AG04450 (cell line): ENCODE measurements at regions of chr2 and their contacts with region 1.

Region 1: DNA sequence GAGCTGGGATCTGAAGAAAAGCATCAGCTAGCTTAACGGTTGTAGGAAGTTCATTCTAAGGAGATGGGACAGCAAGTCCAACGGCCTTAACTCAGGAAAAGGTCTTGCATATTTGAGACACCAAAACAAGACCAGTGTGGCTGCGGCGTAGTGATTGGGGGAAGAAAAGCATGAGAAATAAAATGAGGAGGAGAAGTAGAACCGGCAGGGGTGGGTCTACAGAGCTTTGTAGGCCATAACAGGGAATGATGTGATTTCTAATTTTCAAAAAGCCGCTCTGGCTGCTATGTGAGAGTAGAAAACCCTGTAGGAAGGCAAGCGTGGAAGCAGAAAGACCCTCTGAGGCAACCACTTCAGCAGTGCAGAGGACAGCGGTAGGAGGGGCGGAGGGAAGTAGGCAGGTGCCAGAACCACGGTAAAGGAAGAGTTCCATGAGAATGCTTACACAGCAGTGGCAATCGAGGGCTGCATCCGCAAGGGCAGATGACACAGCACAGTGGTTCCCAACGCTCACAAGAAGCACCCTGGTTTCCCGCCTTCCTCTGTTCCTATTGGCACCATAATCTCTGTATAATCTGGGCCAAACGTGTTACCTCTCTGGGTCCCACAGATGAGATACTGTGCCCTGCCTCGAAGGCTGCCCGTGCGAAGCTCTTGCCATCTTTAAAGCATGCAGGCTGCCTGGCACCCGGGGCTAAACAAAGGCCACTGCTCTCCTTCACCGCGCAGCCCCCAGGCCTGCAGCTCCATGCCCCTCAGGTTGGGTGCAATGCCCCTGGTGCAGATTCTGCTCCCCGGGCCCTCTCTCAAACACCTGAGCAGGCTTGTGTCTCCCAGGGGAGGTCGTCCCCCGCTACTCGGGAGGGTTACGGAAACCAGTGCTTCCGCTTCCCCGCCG is 791 bp downstream of the ANKRD39 start:
- DNase-seq: no peak
- H3K4me3 ChIP-seq: peak overlapping the region; percentile 80
- H3K27ac ChIP-seq: peak overlapping the region; percentile 52
- H3K27me3 ChIP-seq: no peaks in the 10 kb centered on the region
- CTCF ChIP-seq: no peak

Region 2: GRCh38 chr2:95700519-95700918 is 1156.5 kb before region 1 on chr2:
- CTCF ChIA-PET with region 1: no interaction called
- POLR2A ChIA-PET with region 1: no interaction called
- DNase-seq: no peak
- H3K4me3 ChIP-seq: no peak overlapping the region
- H3K27ac ChIP-seq: no peak overlapping the region
- H3K27me3 ChIP-seq: peaks cover 16% of the 10 kb centered on the region
- CTCF ChIP-seq: no peak

Region 3: DNA sequence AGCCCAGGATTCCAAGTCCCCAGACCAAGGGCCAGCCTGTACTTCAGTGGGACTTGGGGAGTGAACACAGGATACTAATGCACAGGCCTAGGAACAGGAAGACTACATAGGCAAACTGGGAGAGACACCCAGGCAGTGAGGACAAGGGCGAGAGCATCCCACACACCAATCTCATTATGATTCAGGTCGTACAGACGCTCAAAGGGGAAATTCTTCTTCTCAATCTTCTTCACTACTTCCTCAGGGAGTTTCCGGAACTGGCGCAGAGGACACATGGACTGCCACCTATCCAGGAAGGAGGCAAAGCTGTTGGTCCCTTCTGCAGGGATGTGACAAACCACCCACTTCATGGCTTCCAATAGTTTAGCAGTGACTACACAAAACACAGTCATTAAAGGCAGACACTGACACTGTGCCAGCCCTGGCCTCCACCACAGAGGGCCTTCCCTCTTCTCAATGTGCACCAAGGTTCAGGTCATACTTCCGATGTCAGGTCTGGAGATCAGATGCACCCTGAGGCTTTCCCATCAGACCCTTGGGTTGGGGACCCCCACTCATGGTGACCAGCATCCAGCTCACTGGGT is 569.7 kb before region 1 on chr2:
- CTCF ChIA-PET with region 1: no interaction called
- POLR2A ChIA-PET with region 1: no interaction called
- DNase-seq: no peak
- H3K4me3 ChIP-seq: no peak overlapping the region
- H3K27ac ChIP-seq: no peak overlapping the region
- H3K27me3 ChIP-seq: no peaks in the 10 kb centered on the region
- CTCF ChIP-seq: no peak

Region 4: DNA sequence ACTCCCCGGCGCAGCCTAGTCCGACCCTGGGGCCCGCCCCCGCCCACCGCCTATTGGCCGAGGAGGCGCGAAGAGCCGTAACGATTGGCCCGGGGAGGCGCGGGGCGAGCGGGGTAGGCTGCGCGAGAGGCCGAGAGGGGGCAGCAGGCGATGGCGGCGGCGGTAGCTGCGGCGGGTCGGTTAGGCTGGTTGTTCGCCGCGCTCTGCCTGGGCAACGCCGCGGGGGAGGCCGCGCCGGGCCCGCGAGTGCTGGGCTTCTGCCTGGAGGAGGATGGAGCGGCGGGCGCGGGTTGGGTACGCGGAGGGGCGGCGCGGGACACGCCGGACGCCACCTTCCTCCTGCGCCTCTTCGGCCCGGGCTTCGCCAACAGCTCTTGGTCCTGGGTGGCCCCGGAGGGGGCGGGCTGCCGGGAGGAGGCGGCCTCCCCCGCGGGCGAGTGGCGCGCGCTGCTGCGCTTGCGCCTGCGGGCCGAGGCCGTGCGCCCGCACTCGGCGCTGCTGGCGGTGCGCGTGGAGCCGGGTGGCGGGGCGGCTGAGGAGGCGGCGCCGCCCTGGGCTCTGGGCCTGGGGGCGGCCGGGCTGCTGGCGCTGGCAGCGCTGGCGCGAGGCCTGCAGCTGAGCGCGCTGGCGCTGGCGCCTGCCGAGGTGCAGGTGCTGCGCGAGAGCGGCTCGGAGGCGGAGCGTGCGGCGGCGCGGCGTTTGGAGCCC is 40.7 kb before region 1 on chr2 and contains the start of gene CNNM3:
- CTCF ChIA-PET with region 1: interaction called, 23 read pairs
- POLR2A ChIA-PET with region 1: interaction called, 4 read pairs
- DNase-seq: peak; percentile 64
- H3K4me3 ChIP-seq: peak within 1 kb of the TSS; percentile 66
- H3K27ac ChIP-seq: peak within 1 kb of the TSS; percentile 21
- H3K27me3 ChIP-seq: no peaks in the 10 kb centered on the region
- CTCF ChIP-seq: peak; percentile 54
- polyA plus RNA-seq, gene CNNM3: 5.1 and 7.1 TPM in 2 replicates

Region 5: GRCh38 chr2:96868555-96869280 is 11.7 kb after region 1 on chr2:
- CTCF ChIA-PET with region 1: interaction called, 60 read pairs
- POLR2A ChIA-PET with region 1: interaction called, 42 read pairs
- DNase-seq: peak; percentile 83
- H3K4me3 ChIP-seq: peak overlapping the region; percentile 85
- H3K27ac ChIP-seq: peak overlapping the region; percentile 93
- H3K27me3 ChIP-seq: no peaks in the 10 kb centered on the region
- CTCF ChIP-seq: peak; percentile 58

Region 6: DNA sequence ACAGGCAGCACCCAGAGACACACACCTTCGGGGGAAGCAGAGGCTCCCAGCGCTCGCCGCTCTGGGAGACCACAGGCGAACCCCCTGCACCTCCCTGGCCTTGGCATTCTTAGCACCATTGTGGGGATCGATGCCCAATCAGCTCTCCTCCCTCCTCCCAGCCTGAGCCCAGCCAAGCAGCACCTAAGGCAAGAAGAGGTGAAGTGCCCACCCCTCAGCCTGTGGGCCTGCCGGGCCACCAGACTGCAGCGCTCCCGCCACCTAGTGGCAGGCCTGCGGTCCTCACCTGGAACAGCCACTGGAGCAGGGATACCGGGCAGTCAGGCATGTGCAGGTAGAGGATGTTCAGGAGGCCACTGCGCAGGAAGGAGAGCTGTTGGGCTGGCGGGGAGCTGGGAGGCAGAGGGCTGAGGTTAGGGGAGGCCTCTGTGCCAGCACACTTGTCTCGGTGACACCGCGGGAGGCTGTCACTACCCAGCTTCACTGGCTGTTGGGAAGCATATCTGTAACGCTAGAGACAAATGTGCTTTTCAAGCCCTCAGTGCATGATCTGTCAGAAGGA is 94.1 kb after region 1 on chr2:
- CTCF ChIA-PET with region 1: interaction called, 51 read pairs
- POLR2A ChIA-PET with region 1: no interaction called
- DNase-seq: no peak
- H3K4me3 ChIP-seq: no peak overlapping the region
- H3K27ac ChIP-seq: no peak overlapping the region
- H3K27me3 ChIP-seq: peaks cover 19% of the 10 kb centered on the region
- CTCF ChIP-seq: peak; percentile 83

Region 7: DNA sequence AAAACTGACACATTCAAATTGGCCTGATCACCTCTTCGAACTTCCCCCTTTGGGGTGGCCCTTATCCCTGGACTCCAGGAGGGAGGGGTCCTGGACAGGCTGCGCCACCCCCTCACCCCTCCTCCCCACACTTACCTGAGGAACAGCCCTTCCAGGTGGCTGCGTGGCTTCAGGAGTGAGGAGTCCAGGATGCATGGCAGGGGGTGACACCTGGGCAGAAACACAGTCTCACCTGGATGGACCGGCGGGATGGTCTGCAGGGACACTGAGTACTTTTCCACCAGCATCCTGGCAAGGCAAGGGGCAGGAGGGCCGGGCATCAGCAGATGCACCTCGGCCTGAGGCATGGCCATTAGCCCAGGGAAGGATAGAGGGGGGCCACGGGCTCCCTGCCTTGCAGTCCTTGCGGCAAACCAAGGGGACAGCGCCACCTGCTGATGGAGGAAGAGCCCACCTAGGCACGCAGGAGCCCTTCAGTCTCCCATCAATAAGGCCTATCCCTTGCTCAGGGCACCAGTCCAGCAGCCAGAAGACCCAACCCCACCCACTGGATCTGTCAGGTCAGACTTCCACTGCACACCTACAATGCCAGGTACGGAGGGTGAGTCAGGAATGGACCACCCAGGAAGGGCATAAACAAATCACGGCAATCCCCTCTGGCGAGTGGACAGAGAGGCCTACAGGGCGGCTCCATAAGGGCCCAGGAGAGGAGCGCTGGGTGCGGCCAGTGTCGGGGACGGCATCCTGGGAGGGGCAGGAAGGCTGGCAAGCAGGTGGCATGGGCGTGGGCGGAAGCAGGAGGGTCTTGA is 103.3 kb after region 1 on chr2:
- CTCF ChIA-PET with region 1: interaction called, 51 read pairs
- POLR2A ChIA-PET with region 1: no interaction called
- DNase-seq: peak; percentile 61
- H3K4me3 ChIP-seq: no peak overlapping the region
- H3K27ac ChIP-seq: no peak overlapping the region
- H3K27me3 ChIP-seq: peaks cover 2% of the 10 kb centered on the region
- CTCF ChIP-seq: peak; percentile 94

Region 8: GRCh38 chr2:97005352-97005751 is 148.3 kb after region 1 on chr2:
- CTCF ChIA-PET with region 1: interaction called, 10 read pairs
- POLR2A ChIA-PET with region 1: no interaction called
- DNase-seq: no peak
- H3K4me3 ChIP-seq: no peak overlapping the region
- H3K27ac ChIP-seq: no peak overlapping the region
- H3K27me3 ChIP-seq: peaks cover 6% of the 10 kb centered on the region
- CTCF ChIP-seq: peak; percentile 49

Region 9: DNA sequence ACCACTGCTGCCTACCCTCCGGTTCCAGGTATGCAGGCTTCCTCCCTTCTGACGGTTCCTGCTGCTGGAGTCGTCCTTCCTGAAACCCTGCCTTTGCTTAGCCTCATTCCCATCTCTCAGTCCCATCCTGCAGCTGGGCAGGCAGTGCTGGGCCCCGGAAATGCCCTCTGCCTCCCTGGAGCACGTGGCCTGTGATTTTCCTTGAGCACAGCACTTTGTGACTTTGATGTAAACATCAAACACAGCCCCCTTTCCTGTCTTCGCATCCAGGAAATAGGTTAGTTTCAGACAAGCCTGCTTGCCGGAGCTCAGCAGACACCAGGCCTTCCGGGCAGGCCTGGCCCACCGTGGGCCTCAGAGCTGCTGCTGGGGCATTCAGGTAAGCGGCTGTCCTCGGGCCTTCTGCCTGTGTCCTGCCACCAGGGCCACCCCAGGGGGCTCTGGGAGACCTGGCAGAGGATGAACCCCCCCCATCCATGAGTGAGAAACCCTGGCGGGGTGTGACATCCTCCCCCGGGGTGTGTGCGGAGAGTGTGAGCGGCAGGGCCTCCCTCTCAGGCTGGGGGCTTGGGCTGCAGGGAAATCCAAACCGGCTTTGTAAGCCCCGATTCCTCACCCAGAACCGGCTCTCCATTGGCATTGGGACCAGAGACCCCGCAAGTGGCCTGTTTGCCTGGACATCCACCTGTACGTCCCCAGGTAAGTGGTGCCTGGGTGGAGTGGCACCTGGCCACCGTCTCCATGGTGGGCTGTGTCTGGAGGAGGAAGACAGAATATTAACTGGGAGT is 856.5 kb after region 1 on chr2 and contains the start of gene ZAP70:
- CTCF ChIA-PET with region 1: no interaction called
- POLR2A ChIA-PET with region 1: no interaction called
- DNase-seq: no peak
- H3K4me3 ChIP-seq: no peak within 1 kb of the TSS
- H3K27ac ChIP-seq: no peak within 1 kb of the TSS
- H3K27me3 ChIP-seq: peaks cover 14% of the 10 kb centered on the region
- CTCF ChIP-seq: no peak
- polyA plus RNA-seq, gene ZAP70: 0.06 TPM in 1 of 2 replicates, not detected in the other